ENCODE measurements at regions of chr20 and their contacts with region 1.

Region 1: DNA sequence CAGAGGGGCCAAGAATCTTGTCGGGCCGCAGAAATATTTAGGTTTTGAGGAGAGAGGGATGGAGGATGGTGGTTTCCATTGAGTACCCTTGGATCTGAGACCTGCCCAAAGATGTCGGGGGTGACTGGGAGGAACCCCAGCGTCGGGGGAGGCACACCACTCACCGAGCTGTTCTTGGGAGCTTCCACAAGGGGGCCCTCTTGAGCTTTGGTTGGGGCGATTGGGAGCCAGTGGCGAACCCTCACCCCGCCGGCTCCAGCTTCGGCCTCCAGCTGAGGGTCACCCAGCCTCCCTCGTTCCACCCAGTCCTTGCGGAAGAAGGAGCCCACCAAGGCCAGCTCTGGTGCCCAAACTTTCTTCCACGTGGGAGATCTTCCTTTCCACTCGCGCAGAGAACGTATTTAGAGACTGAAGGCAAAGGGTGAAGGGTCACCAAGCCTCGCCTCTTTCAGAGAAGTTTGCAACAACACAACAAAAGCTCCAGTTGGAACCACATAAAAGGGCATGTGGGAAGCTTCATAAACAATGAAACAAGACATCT is 33.6 kb downstream of the APCDD1L start:
- DNase-seq: peak; percentile 61
- H3K4me3 Mint-ChIP-seq: no peak overlapping the region
- H3K27ac Mint-ChIP-seq: no peak overlapping the region
- H3K4me1 Mint-ChIP-seq: no peaks in the 10 kb centered on the region
- H3K27me3 Mint-ChIP-seq: peaks cover 13% of the 10 kb centered on the region

Region 2: GRCh38 chr20:58839991-58840759 is 358.6 kb after region 1 on chr20:
- CTCF ChIA-PET with region 1: interaction called, 8 read pairs
- POLR2A ChIA-PET with region 1: no interaction called
- intact Hi-C with region 1: loop called (anchors 5 kb)
- DNase-seq: no peak
- H3K4me3 Mint-ChIP-seq: peak overlapping the region; percentile 41
- H3K27ac Mint-ChIP-seq: no peak overlapping the region
- H3K4me1 Mint-ChIP-seq: peaks cover 3% of the 10 kb centered on the region
- H3K27me3 Mint-ChIP-seq: peaks cover 49% of the 10 kb centered on the region

Region 3: DNA sequence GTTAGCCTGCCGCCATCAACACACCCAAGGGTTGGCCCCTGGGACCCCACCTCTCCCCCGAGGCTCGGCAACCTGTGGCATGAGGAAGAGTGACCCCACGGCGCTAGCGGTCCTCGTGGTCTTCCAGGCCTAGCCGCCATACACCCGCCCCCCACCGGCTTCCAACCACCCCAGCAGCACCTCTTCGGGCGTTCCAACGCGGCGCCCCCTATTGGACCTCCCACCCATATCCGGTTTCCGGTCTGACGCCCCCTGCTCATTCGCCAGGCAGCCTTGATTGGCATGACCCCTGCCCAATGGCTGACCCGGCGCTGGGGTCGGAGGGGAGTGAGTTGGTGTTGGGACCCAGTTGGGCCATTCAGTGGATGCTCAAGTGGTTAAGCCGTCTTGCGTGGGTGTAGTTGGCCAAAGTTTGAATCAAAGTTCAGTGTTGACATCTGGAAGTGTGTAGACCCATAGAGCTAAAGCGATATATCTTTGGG is 369.2 kb after region 1 on chr20 and contains the start of gene GNAS-AS1:
- CTCF ChIA-PET with region 1: interaction called, 10 read pairs
- POLR2A ChIA-PET with region 1: no interaction called
- intact Hi-C with region 1: no loop called
- DNase-seq: peak; percentile 90
- H3K4me3 Mint-ChIP-seq: peak within 1 kb of the TSS; percentile 86
- H3K27ac Mint-ChIP-seq: no peak within 1 kb of the TSS
- H3K4me1 Mint-ChIP-seq: peaks cover 28% of the 10 kb centered on the region
- H3K27me3 Mint-ChIP-seq: peaks cover 48% of the 10 kb centered on the region
- total RNA-seq, gene GNAS-AS1: 1.1 to 1.3 TPM